B cell (primary cell): ENCODE measurements at regions of chr17 and their contacts with region 1.

Region 1: DNA sequence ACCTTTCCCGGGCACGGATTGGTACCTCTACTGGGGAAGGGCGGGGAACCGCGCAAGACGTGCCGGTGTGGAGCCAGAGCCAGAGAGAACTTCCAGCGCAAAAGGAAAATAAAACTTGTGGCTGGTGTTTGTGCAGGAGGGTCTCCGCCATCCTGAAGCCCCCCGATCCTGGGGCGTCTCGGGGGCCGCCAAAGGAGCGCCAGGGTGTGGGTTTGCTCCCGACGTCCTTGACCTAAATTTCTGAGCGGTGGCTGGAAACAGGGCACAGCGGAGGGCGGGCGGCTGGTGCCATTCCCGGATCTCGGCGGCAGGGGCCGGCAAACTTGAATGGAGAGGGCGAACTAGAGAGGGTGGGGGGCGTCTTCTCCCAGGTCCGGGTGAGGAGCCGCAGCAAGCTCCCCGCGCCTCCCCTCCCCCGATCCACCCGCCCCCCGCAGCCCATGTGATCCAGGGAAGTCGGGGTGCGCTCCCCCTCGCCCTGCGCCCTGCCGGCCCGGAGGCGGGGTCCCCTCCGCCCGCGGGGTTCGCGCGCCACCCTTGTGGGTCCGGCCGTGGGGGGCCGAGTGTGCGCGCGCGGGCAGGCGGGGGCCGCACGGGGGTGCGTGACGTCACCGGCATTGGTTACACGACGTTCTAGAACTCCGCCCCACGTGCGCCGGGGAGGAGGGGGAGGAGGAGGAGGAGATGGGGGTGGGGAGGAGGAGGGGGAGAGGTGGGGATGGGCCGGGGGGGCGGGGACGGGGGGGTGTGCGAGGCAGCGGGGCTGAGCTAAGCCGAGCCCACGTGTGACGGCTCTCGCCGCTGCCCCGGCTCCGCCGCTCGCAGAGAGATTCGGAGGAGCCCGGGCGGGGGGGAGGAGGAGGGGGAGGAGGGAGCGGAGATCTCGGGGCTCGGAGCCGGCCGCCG is at the start of gene MSI2:
- DNase-seq: peak; percentile 94
- ATAC-seq: peak; percentile 79
- H3K4me3 ChIP-seq: peak within 1 kb of the TSS; percentile 67 to 97 (median 76)
- H3K4me3 Mint-ChIP-seq: peak within 1 kb of the TSS; percentile 92
- H3K27ac ChIP-seq: peak within 1 kb of the TSS; percentile 65 to 66
- H3K27ac Mint-ChIP-seq: peak within 1 kb of the TSS; percentile 85
- H3K4me1 ChIP-seq: peaks cover 34 to 44% of the 10 kb centered on the region in 2 donors
- H3K4me1 Mint-ChIP-seq: peaks cover 38% of the 10 kb centered on the region
- H3K27me3 ChIP-seq: no peaks in the 10 kb centered on the region
- H3K27me3 Mint-ChIP-seq: no peaks in the 10 kb centered on the region
- CTCF ChIP-seq: no peak
- total RNA-seq, gene MSI2: 196 and 222 TPM in 2 replicates

Region 2: GRCh38 chr17:57009737-57010445 is 246.1 kb before region 1 on chr17:
- CTCF ChIA-PET with region 1: no interaction called
- POLR2A ChIA-PET with region 1: no interaction called
- intact Hi-C with region 1: loop called (anchors 10 kb)
- DNase-seq: peak; percentile 72
- ATAC-seq: peak; percentile 57
- H3K4me3 ChIP-seq: peak overlapping the region in 3 of 5 experiments; percentile 41 to 54 (median 50)
- H3K4me3 Mint-ChIP-seq: peak overlapping the region; percentile 49
- H3K27ac ChIP-seq: no peak overlapping the region
- H3K27ac Mint-ChIP-seq: peak overlapping the region; percentile 32
- H3K4me1 ChIP-seq: peaks cover 20 to 21% of the 10 kb centered on the region in 2 donors
- H3K4me1 Mint-ChIP-seq: peaks cover 39% of the 10 kb centered on the region
- H3K27me3 ChIP-seq: no peaks in the 10 kb centered on the region
- H3K27me3 Mint-ChIP-seq: no peaks in the 10 kb centered on the region
- CTCF ChIP-seq: peak; percentile 81

Region 3: GRCh38 chr17:57226793-57227192 is 29.2 kb before region 1 on chr17:
- CTCF ChIA-PET with region 1: no interaction called
- POLR2A ChIA-PET with region 1: no interaction called
- intact Hi-C with region 1: no loop called
- DNase-seq: no peak
- ATAC-seq: no peak
- H3K4me3 ChIP-seq: no peak overlapping the region
- H3K4me3 Mint-ChIP-seq: no peak overlapping the region
- H3K27ac ChIP-seq: no peak overlapping the region
- H3K27ac Mint-ChIP-seq: no peak overlapping the region
- H3K4me1 ChIP-seq: no peaks in the 10 kb centered on the region
- H3K4me1 Mint-ChIP-seq: no peaks in the 10 kb centered on the region
- H3K27me3 ChIP-seq: peaks cover 0 to 3% (median under 1%) of the 10 kb centered on the region in 4 experiments
- H3K27me3 Mint-ChIP-seq: peaks cover 18% of the 10 kb centered on the region
- CTCF ChIP-seq: no peak

Region 4: DNA sequence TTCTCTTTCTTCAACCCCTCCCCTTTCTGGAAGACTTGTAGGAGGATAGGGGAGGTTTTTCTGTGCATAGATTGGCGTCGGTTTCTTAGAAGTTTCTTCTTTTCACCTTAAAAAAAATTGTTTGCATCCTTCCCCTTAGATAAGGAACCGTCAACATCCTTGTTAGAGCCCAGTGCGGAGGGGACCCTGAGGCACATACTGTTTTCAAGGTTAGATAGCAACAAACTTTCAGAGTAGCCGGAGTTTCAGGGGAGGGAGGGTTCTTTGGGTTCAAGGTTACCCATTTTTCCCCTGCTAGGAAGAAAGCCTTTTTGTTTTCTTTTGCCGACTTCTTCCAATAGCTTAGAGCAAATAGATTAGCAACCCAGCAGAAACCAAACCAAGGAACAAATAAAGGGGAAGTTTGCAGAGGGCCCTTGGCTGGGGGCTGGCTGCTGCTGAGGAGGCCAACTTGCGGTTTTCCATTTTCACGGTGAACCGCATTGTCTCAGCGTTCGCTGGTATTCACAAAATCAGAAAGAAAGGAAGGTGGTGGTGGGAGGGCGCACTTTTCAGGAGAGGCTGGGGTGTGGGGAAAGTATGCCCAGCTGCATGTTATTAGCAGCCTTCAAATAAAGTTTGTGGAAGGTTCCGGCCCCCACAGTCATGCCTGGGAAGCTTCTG is 29.1 kb after region 1 on chr17:
- CTCF ChIA-PET with region 1: interaction called, 3 read pairs
- POLR2A ChIA-PET with region 1: interaction called, 3 read pairs
- intact Hi-C with region 1: loop called (anchors 1 kb)
- DNase-seq: peak; percentile 76
- ATAC-seq: peak; percentile 83
- H3K4me3 ChIP-seq: peak overlapping the region in 3 of 5 experiments; percentile 38 to 43 (median 40)
- H3K4me3 Mint-ChIP-seq: peak overlapping the region; percentile 83
- H3K27ac ChIP-seq: peak overlapping the region in 1 of 2 donors; percentile 44
- H3K27ac Mint-ChIP-seq: peak overlapping the region; percentile 74
- H3K4me1 ChIP-seq: peaks cover 14 to 24% of the 10 kb centered on the region in 2 donors
- H3K4me1 Mint-ChIP-seq: peaks cover 51% of the 10 kb centered on the region
- H3K27me3 ChIP-seq: no peaks in the 10 kb centered on the region
- H3K27me3 Mint-ChIP-seq: no peaks in the 10 kb centered on the region
- CTCF ChIP-seq: no peak

Region 5: DNA sequence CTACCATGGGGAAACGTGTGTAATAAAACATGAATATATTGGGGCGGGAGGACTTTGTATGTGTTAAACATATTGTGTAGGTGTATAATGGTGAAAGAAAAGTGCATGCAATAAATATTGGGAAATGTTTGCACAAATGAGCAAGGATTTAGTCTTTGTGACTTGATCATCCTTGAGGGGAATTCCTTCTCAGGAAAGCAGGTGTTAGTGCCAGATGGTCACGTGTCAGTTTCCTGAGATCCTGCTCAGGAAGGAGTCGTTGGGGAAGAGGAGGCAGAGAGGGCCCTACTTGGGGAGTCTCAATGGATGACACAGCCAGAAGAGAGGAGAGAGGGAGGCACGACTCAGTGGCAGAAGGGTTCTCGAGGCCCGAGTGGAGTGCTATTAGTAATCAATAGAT is 53.5 kb after region 1 on chr17:
- CTCF ChIA-PET with region 1: no interaction called
- POLR2A ChIA-PET with region 1: no interaction called
- intact Hi-C with region 1: no loop called
- DNase-seq: no peak
- ATAC-seq: no peak
- H3K4me3 ChIP-seq: no peak overlapping the region
- H3K4me3 Mint-ChIP-seq: no peak overlapping the region
- H3K27ac ChIP-seq: no peak overlapping the region
- H3K27ac Mint-ChIP-seq: no peak overlapping the region
- H3K4me1 ChIP-seq: no peaks in the 10 kb centered on the region
- H3K4me1 Mint-ChIP-seq: peaks cover 20% of the 10 kb centered on the region
- H3K27me3 ChIP-seq: no peaks in the 10 kb centered on the region
- H3K27me3 Mint-ChIP-seq: no peaks in the 10 kb centered on the region
- CTCF ChIP-seq: no peak

Region 6: GRCh38 chr17:57468932-57469775 is 213.1 kb after region 1 on chr17:
- CTCF ChIA-PET with region 1: no interaction called
- POLR2A ChIA-PET with region 1: no interaction called
- intact Hi-C with region 1: no loop called
- DNase-seq: no peak
- ATAC-seq: peak; percentile 59
- H3K4me3 ChIP-seq: no peak overlapping the region
- H3K4me3 Mint-ChIP-seq: no peak overlapping the region
- H3K27ac ChIP-seq: peak overlapping the region in 1 of 2 donors; percentile 13
- H3K27ac Mint-ChIP-seq: peak overlapping the region; percentile 70
- H3K4me1 ChIP-seq: peaks cover 20 to 28% of the 10 kb centered on the region in 2 donors
- H3K4me1 Mint-ChIP-seq: peaks cover 53% of the 10 kb centered on the region
- H3K27me3 ChIP-seq: no peaks in the 10 kb centered on the region
- H3K27me3 Mint-ChIP-seq: no peaks in the 10 kb centered on the region
- CTCF ChIP-seq: no peak

Region 7: GRCh38 chr17:57552114-57552624 is 296.1 kb after region 1 on chr17:
- CTCF ChIA-PET with region 1: no interaction called
- POLR2A ChIA-PET with region 1: interaction called, 6 read pairs
- intact Hi-C with region 1: loop called (anchors 5 kb)
- DNase-seq: peak; percentile 81
- ATAC-seq: peak; percentile 31
- H3K4me3 ChIP-seq: peak overlapping the region in 4 of 5 experiments; percentile 32 to 55 (median 48)
- H3K4me3 Mint-ChIP-seq: peak overlapping the region; percentile 81
- H3K27ac ChIP-seq: peak overlapping the region; percentile 96 to 97
- H3K27ac Mint-ChIP-seq: peak overlapping the region; percentile 87
- H3K4me1 ChIP-seq: peaks cover 94 to 100% of the 10 kb centered on the region in 2 donors
- H3K4me1 Mint-ChIP-seq: peaks cover 98% of the 10 kb centered on the region
- H3K27me3 ChIP-seq: no peaks in the 10 kb centered on the region
- H3K27me3 Mint-ChIP-seq: no peaks in the 10 kb centered on the region
- CTCF ChIP-seq: peak; percentile 77

Region 8: GRCh38 chr17:58006924-58007780 is 751.1 kb after region 1 on chr17 and contains the start of gene SRSF1:
- CTCF ChIA-PET with region 1: no interaction called
- POLR2A ChIA-PET with region 1: no interaction called
- intact Hi-C with region 1: loop called (anchors 2 kb)
- DNase-seq: peak; percentile 99
- ATAC-seq: peak; percentile 87
- H3K4me3 ChIP-seq: peak within 1 kb of the TSS; percentile 83 to 100 (median 96)
- H3K4me3 Mint-ChIP-seq: peak within 1 kb of the TSS; percentile 100
- H3K27ac ChIP-seq: peak within 1 kb of the TSS; percentile 93 to 95
- H3K27ac Mint-ChIP-seq: peak within 1 kb of the TSS; percentile 100
- H3K4me1 ChIP-seq: peaks cover 25 to 38% of the 10 kb centered on the region in 2 donors
- H3K4me1 Mint-ChIP-seq: peaks cover 46% of the 10 kb centered on the region
- H3K27me3 ChIP-seq: no peaks in the 10 kb centered on the region
- H3K27me3 Mint-ChIP-seq: no peaks in the 10 kb centered on the region
- CTCF ChIP-seq: no peak
- total RNA-seq, gene SRSF1: 221 and 250 TPM in 2 replicates